Naive thymus-derived CD4-positive, alpha-beta T cell (primary cell): ENCODE measurements at regions of chr9 and their contacts with region 1.

Region 1: DNA sequence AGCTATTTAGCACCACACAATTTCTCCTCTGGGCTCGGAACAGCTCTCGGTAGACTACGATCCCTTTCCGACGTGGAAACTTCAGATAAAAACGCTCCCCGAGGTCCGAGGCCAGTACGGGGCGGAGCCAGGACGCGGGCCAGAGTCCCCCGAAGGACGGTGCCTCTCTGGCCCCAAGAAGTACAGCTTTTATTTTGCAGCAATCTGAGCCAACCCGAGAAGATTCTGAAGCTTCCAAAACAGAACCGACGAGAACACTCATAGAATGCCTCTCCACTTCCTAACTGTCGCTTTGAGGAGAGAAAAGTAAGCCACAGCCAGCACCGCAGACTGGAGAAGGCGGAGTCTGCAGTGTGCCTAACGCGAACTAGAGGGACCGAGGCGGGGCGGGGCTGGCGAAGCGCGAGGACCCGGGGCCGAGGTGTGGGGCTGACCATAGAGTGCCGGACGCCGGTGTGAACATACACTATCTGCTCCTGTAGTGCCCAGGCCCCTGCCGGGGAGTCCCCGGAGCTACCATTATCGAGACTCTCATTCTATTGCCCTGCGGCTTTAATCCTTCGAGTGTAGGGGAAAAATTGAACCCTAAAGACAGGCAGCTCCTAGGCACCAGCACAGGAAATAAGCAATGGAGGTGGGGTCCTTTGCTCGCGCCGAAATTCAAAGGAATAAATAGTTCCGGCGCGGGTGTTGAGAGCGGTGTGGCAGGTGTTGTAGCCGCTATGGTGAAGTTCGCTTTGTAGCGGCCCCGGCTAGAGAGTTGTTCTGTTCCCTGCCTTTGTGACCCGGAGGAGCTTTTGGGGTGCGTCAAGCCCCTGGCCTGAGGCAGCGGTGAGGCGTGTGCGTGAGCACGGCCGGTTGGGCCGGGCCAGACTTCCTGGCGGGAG is at the start of gene SMC2:
- DNase-seq: peak; percentile 89 to 97 (median 95)
- ATAC-seq: peak; percentile 98
- H3K4me3 ChIP-seq: peak within 1 kb of the TSS; percentile 87
- H3K4me3 Mint-ChIP-seq: peak within 1 kb of the TSS; percentile 95 to 100 (median 100)
- H3K27ac ChIP-seq: peak within 1 kb of the TSS; percentile 94
- H3K27ac Mint-ChIP-seq: peak within 1 kb of the TSS; percentile 94 to 100 (median 99)
- H3K4me1 ChIP-seq: peaks cover 11 to 17% of the 10 kb centered on the region in 2 donors
- H3K4me1 Mint-ChIP-seq: peaks cover 17 to 58% (median 49%) of the 10 kb centered on the region in 7 donors
- H3K27me3 ChIP-seq: no peaks in the 10 kb centered on the region
- H3K27me3 Mint-ChIP-seq: peaks cover 0 to 3% (median 0%) of the 10 kb centered on the region in 5 donors
- total RNA-seq, gene SMC2: 4.4 to 53.6 (median 11.3) TPM

Region 2: GRCh38 chr9:103991698-103992097 is 102.2 kb before region 1 on chr9:
- CTCF ChIA-PET with region 1: no interaction called
- POLR2A ChIA-PET with region 1: no interaction called
- intact Hi-C with region 1: no loop called
- DNase-seq: no peak
- ATAC-seq: no peak
- H3K4me3 ChIP-seq: no peak overlapping the region
- H3K4me3 Mint-ChIP-seq: no peak overlapping the region
- H3K27ac ChIP-seq: no peak overlapping the region
- H3K27ac Mint-ChIP-seq: peak overlapping the region in 1 of 9 donors; percentile 69
- H3K4me1 ChIP-seq: no peaks in the 10 kb centered on the region
- H3K4me1 Mint-ChIP-seq: peaks cover 0 to 8% (median 0%) of the 10 kb centered on the region in 7 donors
- H3K27me3 ChIP-seq: no peaks in the 10 kb centered on the region
- H3K27me3 Mint-ChIP-seq: peaks cover 0 to 6% (median under 1%) of the 10 kb centered on the region in 5 donors

Region 3: DNA sequence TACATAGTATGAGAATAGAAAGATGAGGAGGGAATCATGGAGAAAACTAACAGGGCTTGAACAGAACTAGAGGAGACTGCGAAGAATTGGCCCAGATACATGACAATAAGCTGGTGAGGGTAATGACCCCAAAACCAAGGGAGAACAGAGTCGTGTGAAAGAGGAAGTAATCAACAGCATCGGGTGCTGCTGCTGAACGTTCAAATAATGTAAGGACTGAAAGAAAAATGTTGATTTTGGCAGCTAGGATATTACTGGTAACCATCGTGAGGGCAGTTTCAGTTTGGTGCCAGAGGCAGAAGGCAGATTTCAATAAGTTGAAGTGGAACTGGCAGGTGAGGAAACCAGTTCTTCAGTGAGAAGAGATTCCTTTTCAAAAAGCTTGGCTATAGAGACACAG is 66.6 kb before region 1 on chr9:
- CTCF ChIA-PET with region 1: interaction called, 3 read pairs
- POLR2A ChIA-PET with region 1: no interaction called
- intact Hi-C with region 1: loop called (anchors 2 to 5 kb)
- DNase-seq: no peak
- ATAC-seq: peak; percentile 50
- H3K4me3 ChIP-seq: no peak overlapping the region
- H3K4me3 Mint-ChIP-seq: peak overlapping the region in 4 of 10 donors; percentile 2 to 27 (median 12)
- H3K27ac ChIP-seq: no peak overlapping the region
- H3K27ac Mint-ChIP-seq: peak overlapping the region in 1 of 9 donors; percentile 10
- H3K4me1 ChIP-seq: no peaks in the 10 kb centered on the region
- H3K4me1 Mint-ChIP-seq: peaks cover 8 to 22% (median 17%) of the 10 kb centered on the region in 7 donors
- H3K27me3 ChIP-seq: no peaks in the 10 kb centered on the region
- H3K27me3 Mint-ChIP-seq: peaks cover 0 to 11% (median 7%) of the 10 kb centered on the region in 5 donors

Region 4: GRCh38 chr9:104747558-104748358 is 653.9 kb after region 1 on chr9 and contains the start of gene NIPSNAP3A:
- CTCF ChIA-PET with region 1: no interaction called
- POLR2A ChIA-PET with region 1: interaction called, 11 read pairs
- intact Hi-C with region 1: loop called (anchors 1 kb)
- DNase-seq: peak; percentile 78 to 96 (median 89)
- ATAC-seq: peak; percentile 93
- H3K4me3 ChIP-seq: peak within 1 kb of the TSS; percentile 87
- H3K4me3 Mint-ChIP-seq: peak within 1 kb of the TSS; percentile 88 to 98 (median 96)
- H3K27ac ChIP-seq: peak within 1 kb of the TSS; percentile 93
- H3K27ac Mint-ChIP-seq: peak within 1 kb of the TSS; percentile 92 to 99 (median 97)
- H3K4me1 ChIP-seq: peaks cover 0 to 8% of the 10 kb centered on the region in 2 donors
- H3K4me1 Mint-ChIP-seq: peaks cover 14 to 26% (median 22%) of the 10 kb centered on the region in 7 donors
- H3K27me3 ChIP-seq: no peaks in the 10 kb centered on the region
- H3K27me3 Mint-ChIP-seq: peaks cover 0 to 2% (median 0%) of the 10 kb centered on the region in 5 donors
- total RNA-seq, gene NIPSNAP3A: 7.1 to 17.4 (median 13.4) TPM

Region 5: GRCh38 chr9:104927912-104928740 is 834.2 kb after region 1 on chr9 and contains the start of gene ABCA1:
- CTCF ChIA-PET with region 1: no interaction called
- POLR2A ChIA-PET with region 1: no interaction called
- intact Hi-C with region 1: loop called in 1 of 2 experiments (anchors 2 kb)
- DNase-seq: peak; percentile 55 to 82 (median 73)
- ATAC-seq: peak; percentile 83
- H3K4me3 ChIP-seq: peak within 1 kb of the TSS; percentile 84
- H3K4me3 Mint-ChIP-seq: peak within 1 kb of the TSS; percentile 88 to 97 (median 96)
- H3K27ac ChIP-seq: peak within 1 kb of the TSS; percentile 70
- H3K27ac Mint-ChIP-seq: peak within 1 kb of the TSS in 8 of 9 donors; percentile 54 to 95 (median 72)
- H3K4me1 ChIP-seq: peaks cover 7 to 9% of the 10 kb centered on the region in 2 donors
- H3K4me1 Mint-ChIP-seq: peaks cover 19 to 41% (median 25%) of the 10 kb centered on the region in 7 donors
- H3K27me3 ChIP-seq: no peaks in the 10 kb centered on the region
- H3K27me3 Mint-ChIP-seq: peaks cover 0 to 51% (median 0%) of the 10 kb centered on the region in 5 donors
- total RNA-seq, gene ABCA1: 0.58 to 19.4 (median 1.1) TPM

Region 6: GRCh38 chr9:104991144-104991953 is 897.5 kb after region 1 on chr9:
- CTCF ChIA-PET with region 1: no interaction called
- POLR2A ChIA-PET with region 1: no interaction called
- intact Hi-C with region 1: loop called in 1 of 2 experiments (anchors 1 kb)
- DNase-seq: peak; percentile 79 to 92 (median 86)
- ATAC-seq: peak; percentile 88
- H3K4me3 ChIP-seq: peak overlapping the region; percentile 80
- H3K4me3 Mint-ChIP-seq: peak overlapping the region; percentile 89 to 94 (median 92)
- H3K27ac ChIP-seq: peak overlapping the region; percentile 92
- H3K27ac Mint-ChIP-seq: peak overlapping the region; percentile 68 to 98 (median 92)
- H3K4me1 ChIP-seq: peaks cover 15 to 32% of the 10 kb centered on the region in 2 donors
- H3K4me1 Mint-ChIP-seq: peaks cover 26 to 45% (median 39%) of the 10 kb centered on the region in 7 donors
- H3K27me3 ChIP-seq: no peaks in the 10 kb centered on the region
- H3K27me3 Mint-ChIP-seq: peaks cover 0 to 63% (median 0%) of the 10 kb centered on the region in 5 donors

Region 7: GRCh38 chr9:105405514-105406131 is 1311.7 kb after region 1 on chr9:
- CTCF ChIA-PET with region 1: no interaction called
- POLR2A ChIA-PET with region 1: no interaction called
- intact Hi-C with region 1: loop called in 1 of 2 experiments (anchors 5 kb)
- DNase-seq: peak in 8 of 9 donors; percentile 61 to 92 (median 90)
- ATAC-seq: peak; percentile 94
- H3K4me3 ChIP-seq: peak overlapping the region; percentile 1
- H3K4me3 Mint-ChIP-seq: peak overlapping the region in 9 of 10 donors; percentile 63 to 84 (median 75)
- H3K27ac ChIP-seq: no peak overlapping the region
- H3K27ac Mint-ChIP-seq: peak overlapping the region in 8 of 9 donors; percentile 11 to 96 (median 90)
- H3K4me1 ChIP-seq: peaks cover 19 to 22% of the 10 kb centered on the region in 2 donors
- H3K4me1 Mint-ChIP-seq: peaks cover 20 to 42% (median 34%) of the 10 kb centered on the region in 7 donors
- H3K27me3 ChIP-seq: peaks cover 0 to 6% of the 10 kb centered on the region in 2 donors
- H3K27me3 Mint-ChIP-seq: peaks cover 34 to 82% (median 59%) of the 10 kb centered on the region in 5 donors

Region 8: GRCh38 chr9:105557771-105558610 is 1464.1 kb after region 1 on chr9 and contains the start of gene FKTN:
- CTCF ChIA-PET with region 1: no interaction called
- POLR2A ChIA-PET with region 1: no interaction called
- intact Hi-C with region 1: loop called (anchors 2 to 10 kb)
- DNase-seq: peak; percentile 58 to 85 (median 83)
- ATAC-seq: peak; percentile 98
- H3K4me3 ChIP-seq: peak within 1 kb of the TSS; percentile 95
- H3K4me3 Mint-ChIP-seq: peak within 1 kb of the TSS; percentile 90 to 96 (median 94)
- H3K27ac ChIP-seq: peak within 1 kb of the TSS; percentile 61
- H3K27ac Mint-ChIP-seq: peak within 1 kb of the TSS; percentile 66 to 92 (median 86)
- H3K4me1 ChIP-seq: peaks cover 0 to 6% of the 10 kb centered on the region in 2 donors
- H3K4me1 Mint-ChIP-seq: peaks cover 11 to 37% (median 20%) of the 10 kb centered on the region in 7 donors
- H3K27me3 ChIP-seq: no peaks in the 10 kb centered on the region
- H3K27me3 Mint-ChIP-seq: no peaks in the 10 kb centered on the region
- total RNA-seq, gene FKTN: 8.0 to 15.5 (median 10.8) TPM